Dendritic cell treated with granulocyte-macrophage colony-stimulating factor and Interleukin-4, amounts not matched to agents 40 ng/mL and 50 ng/mL, for 4 days (primary cell): ENCODE measurements at regions of chrX and their contacts with region 1.

Region 1: GRCh38 chrX:13254076-13254785 is 65.6 kb downstream of the ATXN3L start:
- H3K4me3 Mint-ChIP-seq: no peak overlapping the region
- H3K27ac Mint-ChIP-seq: no peak overlapping the region
- H3K4me1 Mint-ChIP-seq: peaks cover 35% of the 10 kb centered on the region
- H3K27me3 Mint-ChIP-seq: no peaks in the 10 kb centered on the region

Region 2: GRCh38 chrX:13087322-13088155 is 166.7 kb before region 1 on chrX:
- intact Hi-C with region 1: loop called (anchors 10 kb)
- H3K4me3 Mint-ChIP-seq: no peak overlapping the region
- H3K27ac Mint-ChIP-seq: peak overlapping the region; percentile 77
- H3K4me1 Mint-ChIP-seq: peaks cover 44% of the 10 kb centered on the region
- H3K27me3 Mint-ChIP-seq: no peaks in the 10 kb centered on the region